CD8-positive, alpha-beta T cell (primary cell): ENCODE measurements at regions of chr3 and their contacts with region 1.

Region 1: GRCh38 chr3:184185461-184186308 is at the start of gene ABCF3:
- DNase-seq: peak; percentile 98 to 100 (median 99)
- ATAC-seq: peak; percentile 97
- H3K4me3 ChIP-seq: peak within 1 kb of the TSS; percentile 95 to 98
- H3K4me3 Mint-ChIP-seq: peak within 1 kb of the TSS; percentile 98
- H3K27ac ChIP-seq: peak within 1 kb of the TSS; percentile 82 to 83
- H3K27ac Mint-ChIP-seq: peak within 1 kb of the TSS; percentile 96
- H3K4me1 ChIP-seq: peaks cover 26% of the 10 kb centered on the region
- H3K4me1 Mint-ChIP-seq: peaks cover 42% of the 10 kb centered on the region
- H3K27me3 ChIP-seq: no peaks in the 10 kb centered on the region
- H3K27me3 Mint-ChIP-seq: no peaks in the 10 kb centered on the region
- CTCF ChIP-seq: no peak
- total RNA-seq, gene ABCF3: 192 to 193 TPM

Region 2: GRCh38 chr3:184017672-184018423 is 167.8 kb before region 1 on chr3 and contains the start of gene ABCC5:
- CTCF ChIA-PET with region 1: no interaction called
- POLR2A ChIA-PET with region 1: no interaction called
- intact Hi-C with region 1: loop called (anchors 2 kb)
- DNase-seq: peak; percentile 60 to 91 (median 80)
- ATAC-seq: peak; percentile 94
- H3K4me3 ChIP-seq: peak within 1 kb of the TSS; percentile 94 to 98
- H3K4me3 Mint-ChIP-seq: peak within 1 kb of the TSS; percentile 99
- H3K27ac ChIP-seq: peak within 1 kb of the TSS; percentile 51 to 56
- H3K27ac Mint-ChIP-seq: peak within 1 kb of the TSS; percentile 83
- H3K4me1 ChIP-seq: peaks cover 11% of the 10 kb centered on the region
- H3K4me1 Mint-ChIP-seq: peaks cover 32% of the 10 kb centered on the region
- H3K27me3 ChIP-seq: no peaks in the 10 kb centered on the region
- H3K27me3 Mint-ChIP-seq: peaks cover 12% of the 10 kb centered on the region
- CTCF ChIP-seq: peak; percentile 76
- total RNA-seq, gene ABCC5: 7.4 to 8.3 TPM

Region 3: GRCh38 chr3:184135149-184135910 is 50.4 kb before region 1 on chr3 and contains the start of gene EIF2B5:
- CTCF ChIA-PET with region 1: interaction called, 3 read pairs
- POLR2A ChIA-PET with region 1: interaction called, 6 read pairs
- intact Hi-C with region 1: loop called (anchors 1 kb)
- DNase-seq: peak; percentile 67 to 95 (median 87)
- ATAC-seq: peak; percentile 89
- H3K4me3 ChIP-seq: peak within 1 kb of the TSS; percentile 79 to 91
- H3K4me3 Mint-ChIP-seq: peak within 1 kb of the TSS; percentile 100
- H3K27ac ChIP-seq: peak within 1 kb of the TSS; percentile 76 to 83
- H3K27ac Mint-ChIP-seq: peak within 1 kb of the TSS; percentile 98
- H3K4me1 ChIP-seq: peaks cover 25% of the 10 kb centered on the region
- H3K4me1 Mint-ChIP-seq: peaks cover 41% of the 10 kb centered on the region
- H3K27me3 ChIP-seq: no peaks in the 10 kb centered on the region
- H3K27me3 Mint-ChIP-seq: no peaks in the 10 kb centered on the region
- CTCF ChIP-seq: no peak
- total RNA-seq, gene EIF2B5: 52.6 to 61.9 TPM

Region 4: DNA sequence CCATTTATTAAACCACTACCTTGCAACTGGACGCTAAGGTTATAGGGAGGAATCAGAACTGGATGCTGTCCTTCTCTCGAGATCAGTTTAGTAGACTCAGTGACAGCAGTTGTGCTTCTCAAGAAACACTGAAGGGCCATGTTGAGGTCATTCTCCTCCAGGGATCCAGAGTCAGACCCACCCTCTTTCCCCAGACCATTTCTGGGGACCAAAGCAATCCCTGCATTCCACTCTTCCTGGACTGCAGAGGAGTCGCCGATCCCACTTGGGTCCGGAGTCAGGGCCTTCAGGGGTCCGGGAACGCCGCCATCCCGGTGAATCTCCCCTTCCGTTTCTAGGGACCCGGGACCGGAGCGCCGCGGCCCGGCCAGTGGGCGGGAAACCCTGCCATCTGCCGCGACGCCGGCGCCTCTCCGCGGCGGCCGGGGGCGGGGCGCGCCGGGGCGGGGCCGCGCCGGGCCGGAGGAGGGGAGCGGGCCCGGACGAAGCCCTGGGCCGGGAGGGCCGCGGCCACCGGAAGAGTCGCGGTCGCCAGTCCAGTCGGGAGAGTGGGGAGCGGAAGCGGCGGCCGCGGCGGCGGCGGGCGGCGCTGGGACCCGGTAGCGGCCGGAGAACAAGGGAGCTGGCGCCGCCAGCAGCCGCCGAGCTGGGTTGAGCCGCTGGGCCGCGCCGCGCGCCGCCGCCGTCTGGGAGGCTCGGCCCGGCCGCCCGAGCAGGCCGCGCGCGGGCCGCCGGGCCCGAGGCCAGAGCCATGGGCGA is 30.6 kb before region 1 on chr3 and contains the start of gene DVL3:
- CTCF ChIA-PET with region 1: no interaction called
- POLR2A ChIA-PET with region 1: no interaction called
- intact Hi-C with region 1: loop called in 1 of 2 experiments (anchors 1 kb)
- DNase-seq: peak in 8 of 9 experiments; percentile 20 to 69 (median 40)
- ATAC-seq: peak; percentile 58
- H3K4me3 ChIP-seq: peak within 1 kb of the TSS; percentile 62 to 85
- H3K4me3 Mint-ChIP-seq: peak within 1 kb of the TSS; percentile 92
- H3K27ac ChIP-seq: peak within 1 kb of the TSS; percentile 48 to 72
- H3K27ac Mint-ChIP-seq: peak within 1 kb of the TSS; percentile 83
- H3K4me1 ChIP-seq: peaks cover 21% of the 10 kb centered on the region
- H3K4me1 Mint-ChIP-seq: peaks cover 27% of the 10 kb centered on the region
- H3K27me3 ChIP-seq: no peaks in the 10 kb centered on the region
- H3K27me3 Mint-ChIP-seq: no peaks in the 10 kb centered on the region
- CTCF ChIP-seq: no peak
- total RNA-seq, gene DVL3: 23.1 to 23.9 TPM

Region 5: DNA sequence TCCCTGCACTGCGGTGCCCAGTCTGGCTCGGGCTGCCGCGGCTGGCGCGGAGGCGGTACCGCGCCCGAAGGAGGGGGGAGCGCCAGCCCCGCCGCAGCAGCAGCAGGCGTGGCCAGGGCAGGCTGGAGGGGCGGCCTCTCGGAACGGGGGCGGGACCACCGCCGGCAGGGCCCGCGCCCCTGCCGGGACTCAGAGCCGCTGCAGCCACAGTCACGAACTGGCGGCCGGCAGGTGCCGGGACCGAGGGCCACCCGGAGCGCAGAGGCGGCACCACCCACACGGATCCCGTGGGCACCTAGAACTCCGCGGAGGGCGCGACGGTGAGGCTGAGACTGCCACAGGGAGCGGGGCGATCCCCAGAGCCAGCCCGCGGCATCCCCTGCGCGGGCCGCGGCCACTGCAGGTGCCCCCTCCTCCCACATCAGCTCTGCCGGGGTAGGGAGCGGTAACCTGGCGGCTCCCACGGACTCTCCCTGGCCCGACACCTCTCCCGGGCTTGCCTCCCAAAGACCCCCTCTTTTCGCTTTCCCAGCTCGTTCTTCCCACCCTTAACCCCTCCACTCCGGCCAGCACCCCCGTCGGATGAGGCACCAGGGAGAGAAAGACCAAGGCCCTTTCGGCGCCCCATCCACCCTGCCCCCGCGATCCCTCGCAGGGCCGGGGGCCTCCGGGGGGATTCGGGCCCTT is 43.9 kb after region 1 on chr3 and contains the start of gene VWA5B2:
- CTCF ChIA-PET with region 1: interaction called, 3 read pairs
- POLR2A ChIA-PET with region 1: no interaction called
- intact Hi-C with region 1: loop called (anchors 1 to 2 kb)
- DNase-seq: peak; percentile 54 to 89 (median 75)
- ATAC-seq: peak; percentile 97
- H3K4me3 ChIP-seq: peak within 1 kb of the TSS; percentile 52 to 80
- H3K4me3 Mint-ChIP-seq: peak within 1 kb of the TSS; percentile 76
- H3K27ac ChIP-seq: no peak within 1 kb of the TSS
- H3K27ac Mint-ChIP-seq: no peak within 1 kb of the TSS
- H3K4me1 ChIP-seq: peaks cover 14% of the 10 kb centered on the region
- H3K4me1 Mint-ChIP-seq: peaks cover 14% of the 10 kb centered on the region
- H3K27me3 ChIP-seq: peaks cover 21 to 31% of the 10 kb centered on the region in 2 experiments
- H3K27me3 Mint-ChIP-seq: peaks cover 49% of the 10 kb centered on the region
- CTCF ChIP-seq: peak; percentile 35
- total RNA-seq, gene VWA5B2: 0.28 to 0.65 TPM

Region 6: DNA sequence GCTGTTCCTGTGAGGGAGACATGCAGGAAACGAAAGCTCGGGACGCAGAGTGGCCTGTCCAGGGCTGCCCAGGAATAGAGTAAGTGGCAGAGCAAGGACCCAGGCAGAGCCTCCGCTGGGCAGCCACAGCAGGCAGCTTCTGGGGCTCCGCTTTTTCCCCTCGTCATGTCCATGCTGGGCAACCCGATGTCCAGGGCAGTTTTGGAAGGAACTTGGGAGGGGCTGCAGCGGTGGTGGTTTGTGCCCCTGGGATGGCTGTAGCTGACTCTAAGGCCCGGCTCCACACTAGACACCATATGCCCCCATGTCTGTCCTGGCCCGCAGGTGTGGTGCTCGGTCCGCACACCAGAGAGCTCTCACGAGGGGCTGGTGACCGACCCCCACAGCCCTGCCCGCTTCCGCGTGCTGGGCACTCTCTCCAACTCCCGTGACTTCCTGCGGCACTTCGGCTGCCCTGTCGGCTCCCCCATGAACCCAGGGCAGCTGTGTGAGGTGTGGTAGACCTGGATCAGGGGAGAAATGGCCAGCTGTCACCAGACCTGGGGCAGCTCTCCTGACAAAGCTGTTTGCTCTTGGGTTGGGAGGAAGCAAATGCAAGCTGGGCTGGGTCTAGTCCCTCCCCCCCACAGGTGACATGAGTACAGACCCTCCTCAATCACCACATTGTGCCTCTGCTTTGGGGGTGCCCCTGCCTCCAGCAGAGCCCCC is 106.2 kb after region 1 on chr3:
- CTCF ChIA-PET with region 1: no interaction called
- POLR2A ChIA-PET with region 1: no interaction called
- intact Hi-C with region 1: no loop called
- DNase-seq: no peak
- ATAC-seq: no peak
- H3K4me3 ChIP-seq: no peak overlapping the region
- H3K4me3 Mint-ChIP-seq: no peak overlapping the region
- H3K27ac ChIP-seq: no peak overlapping the region
- H3K27ac Mint-ChIP-seq: no peak overlapping the region
- H3K4me1 ChIP-seq: no peaks in the 10 kb centered on the region
- H3K4me1 Mint-ChIP-seq: no peaks in the 10 kb centered on the region
- H3K27me3 ChIP-seq: no peaks in the 10 kb centered on the region
- H3K27me3 Mint-ChIP-seq: peaks cover 8% of the 10 kb centered on the region
- CTCF ChIP-seq: no peak

Region 7: GRCh38 chr3:184314363-184314699 is 128.6 kb after region 1 on chr3 and contains the start of gene EIF4G1:
- CTCF ChIA-PET with region 1: no interaction called
- POLR2A ChIA-PET with region 1: interaction called, 3 read pairs
- intact Hi-C with region 1: loop called in 1 of 2 experiments (anchors 1 kb)
- DNase-seq: peak; percentile 83 to 98 (median 92)
- ATAC-seq: peak; percentile 78
- H3K4me3 ChIP-seq: peak within 1 kb of the TSS; percentile 60 to 64
- H3K4me3 Mint-ChIP-seq: peak within 1 kb of the TSS; percentile 87
- H3K27ac ChIP-seq: peak within 1 kb of the TSS; percentile 80 to 93
- H3K27ac Mint-ChIP-seq: peak within 1 kb of the TSS; percentile 94
- H3K4me1 ChIP-seq: peaks cover 23% of the 10 kb centered on the region
- H3K4me1 Mint-ChIP-seq: peaks cover 33% of the 10 kb centered on the region
- H3K27me3 ChIP-seq: no peaks in the 10 kb centered on the region
- H3K27me3 Mint-ChIP-seq: no peaks in the 10 kb centered on the region
- CTCF ChIP-seq: no peak
- total RNA-seq, gene EIF4G1: 220 to 235 TPM